HEK293 (cell line): ENCODE measurements at regions of chr1 and their contacts with region 1.

Region 1: DNA sequence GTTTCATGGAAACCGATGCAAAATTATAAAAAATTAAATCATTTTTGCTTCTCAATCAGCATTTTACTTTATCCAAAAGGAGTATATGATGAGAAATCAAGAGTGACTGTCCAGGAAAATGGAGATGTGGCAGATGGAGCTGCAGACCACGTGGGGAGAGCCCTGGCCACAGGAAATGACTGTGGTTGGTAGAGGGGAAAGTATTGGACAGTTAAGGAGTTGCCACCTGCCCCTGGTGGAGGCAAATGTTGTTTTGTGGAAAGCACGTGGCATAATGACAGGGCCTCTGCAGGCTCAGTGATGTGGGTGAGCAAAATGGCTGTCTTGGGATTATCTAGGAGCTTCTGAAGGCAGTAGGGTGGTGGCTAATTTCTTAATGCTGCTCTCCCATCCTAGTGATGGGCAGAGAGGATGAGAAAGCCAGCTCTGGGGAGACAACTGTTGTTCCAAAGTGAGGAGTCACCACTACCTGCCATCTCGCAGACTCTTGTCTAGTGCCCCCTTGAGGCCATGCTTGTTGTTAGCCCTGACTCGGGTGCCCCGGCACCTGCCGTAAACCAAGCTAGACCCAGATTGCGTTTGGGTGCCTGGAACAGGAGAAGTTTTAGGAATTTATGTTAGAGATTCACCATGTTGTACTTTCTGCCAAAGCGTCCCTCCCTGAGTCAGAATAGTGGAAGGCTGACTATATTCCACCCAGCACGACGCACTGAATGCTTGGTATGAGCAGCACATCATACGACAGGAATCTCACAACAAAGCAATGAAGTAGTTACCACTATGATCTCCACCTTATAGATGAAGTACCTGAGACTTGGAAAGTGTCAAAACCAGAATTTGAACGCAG is 144.0 kb downstream of the ROR1 start:
- H3K4me3 ChIP-seq: no peak overlapping the region
- H3K27ac ChIP-seq: no peak overlapping the region
- H3K4me1 ChIP-seq: peaks cover 11% of the 10 kb centered on the region
- CTCF ChIP-seq: no peak

Region 2: DNA sequence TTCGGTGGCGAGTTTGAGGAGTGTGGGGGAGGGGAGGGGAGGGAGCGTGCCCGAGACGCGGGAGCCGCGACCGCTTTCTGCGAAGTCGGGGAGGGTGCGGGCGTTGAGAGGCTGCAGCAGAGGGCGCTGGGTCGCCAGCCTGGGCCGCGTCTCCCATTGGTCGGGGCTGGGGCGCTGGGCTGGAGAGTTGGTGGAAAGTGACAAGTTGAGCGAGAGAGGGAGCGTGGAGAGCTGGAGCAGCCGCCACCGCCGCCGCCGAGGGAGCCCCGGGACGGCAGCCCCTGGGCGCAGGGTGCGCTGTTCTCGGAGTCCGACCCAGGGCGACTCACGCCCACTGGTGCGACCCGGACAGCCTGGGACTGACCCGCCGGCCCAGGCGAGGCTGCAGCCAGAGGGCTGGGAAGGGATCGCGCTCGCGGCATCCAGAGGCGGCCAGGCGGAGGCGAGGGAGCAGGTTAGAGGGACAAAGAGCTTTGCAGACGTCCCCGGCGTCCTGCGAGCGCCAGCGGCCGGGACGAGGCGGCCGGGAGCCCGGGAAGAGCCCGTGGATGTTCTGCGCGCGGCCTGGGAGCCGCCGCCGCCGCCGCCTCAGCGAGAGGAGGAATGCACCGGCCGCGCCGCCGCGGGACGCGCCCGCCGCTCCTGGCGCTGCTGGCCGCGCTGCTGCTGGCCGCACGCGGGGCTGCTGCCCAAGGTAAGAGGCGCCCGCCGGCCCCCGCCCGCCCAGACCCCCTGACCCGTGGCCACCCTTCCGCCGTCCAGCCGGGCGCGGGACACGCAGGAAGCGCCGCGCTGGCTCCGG is 143.8 kb before region 1 on chr1 and contains the start of gene ROR1:
- CTCF ChIA-PET with region 1: interaction called, 10 read pairs
- POLR2A ChIA-PET with region 1: no interaction called
- H3K4me3 ChIP-seq: peak within 1 kb of the TSS; percentile 80
- H3K27ac ChIP-seq: peak within 1 kb of the TSS; percentile 92
- H3K4me1 ChIP-seq: peaks cover 24% of the 10 kb centered on the region
- CTCF ChIP-seq: peak; percentile 98

Region 3: DNA sequence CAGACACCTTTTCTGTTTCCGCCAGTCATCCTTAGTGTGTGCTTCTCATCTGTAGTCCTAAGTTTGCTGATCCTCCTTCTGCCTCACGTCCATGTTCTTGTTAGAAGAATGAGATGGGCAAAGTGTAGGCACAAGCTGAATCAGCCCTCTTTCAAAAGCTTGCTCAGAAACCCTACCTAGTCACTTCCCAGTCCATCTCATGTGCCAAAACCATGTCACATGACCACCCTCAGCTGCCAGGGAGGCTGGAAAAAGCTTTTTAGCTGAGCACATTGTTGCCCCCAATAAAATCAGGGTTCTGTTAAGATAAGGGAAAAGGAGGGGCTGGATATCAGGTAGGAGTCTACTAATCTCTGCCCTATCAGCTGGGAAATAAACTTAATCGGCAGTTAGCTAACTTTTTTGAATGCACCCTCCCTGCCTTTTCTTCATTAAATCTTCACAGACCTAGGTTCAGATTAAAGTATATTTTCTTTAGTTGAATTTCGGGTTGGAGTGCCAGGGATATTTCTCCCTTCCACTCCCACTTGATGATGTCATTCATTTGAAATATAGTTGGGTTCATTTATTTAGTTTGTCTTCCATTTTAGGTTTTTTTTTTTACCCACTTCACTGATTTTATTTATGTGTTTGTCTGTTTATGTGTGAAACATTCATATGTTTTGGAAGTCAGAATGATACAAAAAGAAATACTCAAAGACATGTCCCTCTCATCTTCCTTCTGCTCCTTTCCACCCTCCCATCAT is 14.8 kb before region 1 on chr1:
- CTCF ChIA-PET with region 1: interaction called, 14 read pairs
- POLR2A ChIA-PET with region 1: no interaction called
- H3K4me3 ChIP-seq: no peak overlapping the region
- H3K27ac ChIP-seq: no peak overlapping the region; the same call in 1 of the 2 replicates
- H3K4me1 ChIP-seq: peaks cover 16% of the 10 kb centered on the region
- CTCF ChIP-seq: no peak

Region 4: DNA sequence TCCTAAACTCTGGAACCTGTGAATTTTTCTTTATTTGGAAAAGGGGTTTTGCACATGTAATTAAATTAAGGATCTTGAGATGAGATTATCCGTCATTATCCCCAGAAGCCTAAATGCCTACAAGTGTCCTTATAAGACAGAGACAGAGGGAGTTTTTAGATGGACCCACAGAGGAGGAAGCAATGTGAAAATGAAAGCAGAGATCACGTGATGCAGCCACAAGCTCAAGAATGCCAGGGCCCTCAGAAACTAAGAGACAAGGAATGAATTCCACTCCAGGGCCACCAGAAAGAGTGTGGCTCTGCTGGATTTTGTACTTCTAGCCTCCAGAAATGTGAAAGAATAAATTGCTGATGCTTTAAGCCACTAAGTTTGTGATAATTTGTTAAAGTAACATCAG is 102.0 kb after region 1 on chr1:
- CTCF ChIA-PET with region 1: no interaction called
- POLR2A ChIA-PET with region 1: no interaction called
- H3K4me3 ChIP-seq: no peak overlapping the region
- H3K27ac ChIP-seq: no peak overlapping the region
- H3K4me1 ChIP-seq: no peaks in the 10 kb centered on the region
- CTCF ChIP-seq: no peak